Activated CD8-positive, alpha-beta memory T cell treated with anti-CD3 and anti-CD28 coated beads, Interleukin-2, amount 10 ng/mL, durations not matched to agents 7 days and 5 days (primary cell): ENCODE measurements at regions of chrX and their contacts with region 1.

Region 1: DNA sequence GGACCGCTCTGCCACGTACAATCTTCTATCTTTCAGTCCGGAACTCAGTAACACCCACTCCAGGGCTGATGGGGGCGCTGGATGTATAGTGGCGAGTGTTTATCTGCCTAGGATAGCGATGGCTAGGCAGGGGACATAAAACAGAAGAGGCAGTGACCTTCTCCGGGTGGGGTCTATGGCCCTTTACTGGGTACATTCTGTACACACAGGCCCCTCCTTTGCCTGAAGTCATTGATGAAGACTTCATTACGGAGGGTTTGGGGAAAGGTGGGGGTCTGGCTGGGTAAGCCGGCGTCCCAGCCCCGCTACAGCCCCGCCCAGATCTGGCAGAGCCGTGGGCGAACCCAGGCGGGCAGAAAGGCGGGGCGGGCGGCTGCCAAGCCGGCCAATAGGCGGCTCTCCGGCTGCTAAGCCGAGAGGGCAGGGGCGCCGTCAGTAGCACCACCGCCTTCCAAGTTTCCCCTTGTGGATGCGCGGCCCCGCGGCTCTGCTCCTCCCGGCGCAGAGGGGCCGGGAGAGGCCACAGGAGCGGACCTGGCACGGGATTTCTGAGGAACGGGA is at the start of gene CHST7:
- DNase-seq: peak; percentile 76
- ATAC-seq: peak; percentile 74
- H3K4me3 Mint-ChIP-seq: peak within 1 kb of the TSS; percentile 75
- H3K27ac Mint-ChIP-seq: peak within 1 kb of the TSS; percentile 82
- H3K4me1 Mint-ChIP-seq: peaks cover 38% of the 10 kb centered on the region
- H3K27me3 Mint-ChIP-seq: no peaks in the 10 kb centered on the region
- total RNA-seq, gene CHST7: 4.6 to 5.9 TPM

Region 2: DNA sequence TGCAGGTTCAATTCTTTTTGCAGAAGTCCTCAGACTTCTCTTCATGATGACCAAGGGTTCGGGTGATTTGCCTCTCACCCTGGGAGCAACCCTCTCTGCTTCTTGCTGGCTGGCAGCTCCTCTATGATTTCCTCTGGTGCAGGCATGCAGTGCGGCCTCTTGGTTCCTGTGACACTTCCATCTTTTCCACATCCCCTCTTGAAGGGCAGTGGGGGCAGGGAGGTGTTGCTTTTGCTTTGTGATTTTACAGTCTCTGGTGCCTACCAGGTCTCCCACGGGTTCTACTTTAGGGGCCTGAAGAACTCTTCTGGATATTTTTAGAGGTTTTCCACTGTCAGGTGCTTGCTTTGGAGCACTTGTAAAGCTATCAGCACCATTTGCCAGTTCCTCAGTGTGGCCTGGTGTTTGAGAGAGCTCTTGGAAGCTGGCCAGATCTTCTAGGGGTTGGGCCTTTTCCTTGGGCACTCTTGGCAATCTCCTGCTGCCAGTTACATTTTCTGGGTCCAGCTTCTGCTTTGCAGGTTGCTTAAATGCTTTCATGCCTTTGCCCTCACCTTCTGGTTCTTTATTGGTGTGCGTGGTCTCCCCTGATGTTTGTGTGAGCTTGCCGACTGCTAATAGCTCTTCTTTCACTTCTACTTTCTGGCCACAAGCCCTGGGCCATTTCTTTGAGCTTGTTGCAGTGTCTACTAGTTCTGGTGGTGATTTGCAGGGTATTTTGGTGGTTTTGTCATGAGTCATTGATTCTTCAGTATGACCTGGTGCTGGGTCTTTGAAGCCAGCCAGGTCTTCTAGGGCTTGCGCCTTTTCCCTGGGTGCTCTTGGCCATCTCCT is 11.4 kb before region 1 on chrX:
- CTCF ChIA-PET with region 1: interaction called, 10 read pairs
- DNase-seq: peak; percentile 62
- ATAC-seq: peak; percentile 89
- H3K4me3 Mint-ChIP-seq: peak overlapping the region; percentile 50
- H3K27ac Mint-ChIP-seq: peak overlapping the region; percentile 58
- H3K4me1 Mint-ChIP-seq: peaks cover 17% of the 10 kb centered on the region
- H3K27me3 Mint-ChIP-seq: peaks cover 2% of the 10 kb centered on the region

Region 3: DNA sequence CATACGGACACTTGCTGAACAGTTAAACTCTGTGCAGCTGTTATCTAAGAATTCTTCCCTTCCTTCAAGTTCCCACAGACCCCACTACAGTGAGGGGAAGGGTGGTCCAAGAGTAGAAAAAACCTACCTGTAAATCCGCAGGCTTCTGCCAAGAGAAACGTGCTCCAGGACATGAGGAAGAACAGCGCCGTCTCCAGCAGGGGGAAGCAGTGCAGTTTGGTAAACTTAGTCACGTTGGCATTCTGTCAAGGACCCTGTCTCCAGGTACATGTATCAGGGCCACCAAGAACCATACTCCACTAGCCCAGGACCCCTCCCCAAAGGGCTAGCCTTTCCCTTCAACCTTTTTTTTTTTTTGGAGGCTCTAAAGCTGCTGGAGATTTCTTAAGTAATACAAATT is 80.1 kb after region 1 on chrX:
- CTCF ChIA-PET with region 1: no interaction called
- DNase-seq: no peak
- ATAC-seq: no peak
- H3K4me3 Mint-ChIP-seq: no peak overlapping the region
- H3K27ac Mint-ChIP-seq: no peak overlapping the region
- H3K4me1 Mint-ChIP-seq: peaks cover 2% of the 10 kb centered on the region
- H3K27me3 Mint-ChIP-seq: no peaks in the 10 kb centered on the region